Thyroid gland (tissue), 4 donors: ENCODE measurements at regions of chr12 and their contacts with region 1.

Region 1: DNA sequence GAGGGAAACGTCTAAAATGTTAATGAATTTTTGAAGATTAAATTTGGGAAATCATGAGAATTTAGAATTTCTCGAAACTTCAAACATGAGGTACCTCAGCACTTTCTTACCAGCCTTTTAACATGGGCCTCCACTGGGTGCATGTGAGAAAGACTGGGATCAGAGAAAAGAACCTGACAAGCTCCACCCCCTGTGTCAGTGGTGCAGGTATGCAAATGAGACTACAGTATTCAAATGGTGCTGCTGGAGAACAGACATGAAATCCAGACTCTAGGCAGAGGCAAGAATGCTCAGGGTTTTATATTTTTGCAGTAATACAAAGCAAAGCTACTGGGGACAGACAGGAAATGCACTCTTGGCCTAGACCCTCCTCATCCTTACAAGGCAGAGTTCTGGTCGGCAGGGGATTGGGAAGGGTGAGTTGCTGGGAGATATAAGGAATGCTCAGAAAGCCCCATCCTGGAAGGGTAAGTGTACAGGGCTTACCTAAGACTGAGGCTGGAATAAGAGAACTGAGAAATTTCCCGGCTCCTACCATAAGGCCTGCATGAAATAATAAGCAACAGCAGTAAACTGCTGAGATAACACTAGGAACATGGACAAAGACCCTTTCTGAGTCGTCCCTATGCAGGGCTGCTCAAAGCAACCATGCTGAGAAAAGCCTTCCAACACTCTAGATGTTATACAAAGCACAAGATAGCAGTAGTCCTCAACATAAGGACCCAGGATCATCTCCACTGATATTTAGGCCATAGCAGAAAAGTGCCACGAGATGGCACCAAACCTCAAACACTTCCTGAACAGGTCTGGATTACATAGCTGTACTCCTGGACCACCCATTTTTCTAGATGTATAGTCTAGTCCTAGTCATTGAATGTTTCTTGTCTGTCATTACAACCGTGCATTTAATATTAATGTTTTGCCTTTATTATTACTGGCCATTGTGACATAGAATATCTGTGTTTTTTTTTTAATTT is 260.8 kb downstream of the RASSF9 start:
- DNase-seq: peak; percentile 53 to 58
- H3K4me3 ChIP-seq: no peak overlapping the region
- H3K27ac ChIP-seq: no peak overlapping the region
- H3K4me1 ChIP-seq: no peaks in the 10 kb centered on the region
- H3K27me3 ChIP-seq: no peaks in the 10 kb centered on the region
- CTCF ChIP-seq: peak in 5 of 6 experiments; percentile 34 to 64 (median 56)
- POLR2A ChIP-seq: no peak

Region 2: DNA sequence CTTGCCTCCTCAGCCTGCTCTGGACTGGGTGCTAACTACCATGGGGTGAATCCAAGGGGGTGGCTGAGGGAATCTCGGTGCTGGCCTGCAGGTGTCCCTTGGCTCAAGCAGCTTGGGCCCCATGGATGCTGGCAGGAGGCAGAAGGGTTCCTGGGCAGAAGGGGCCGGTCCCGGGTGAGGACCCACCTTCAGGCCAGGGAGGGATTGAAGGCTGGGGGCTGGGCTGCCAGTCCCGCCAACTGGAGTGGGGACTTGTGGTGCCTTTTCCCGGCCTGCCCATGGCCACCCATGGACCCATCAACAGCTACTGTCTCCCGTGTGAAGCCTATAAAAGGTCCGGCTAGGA is 1212.9 kb before region 1 on chr12:
- intact Hi-C with region 1: no loop called
- DNase-seq: no peak
- H3K4me3 ChIP-seq: no peak overlapping the region
- H3K27ac ChIP-seq: no peak overlapping the region
- H3K4me1 ChIP-seq: no peaks in the 10 kb centered on the region
- H3K27me3 ChIP-seq: no peaks in the 10 kb centered on the region
- CTCF ChIP-seq: no peak
- POLR2A ChIP-seq: no peak

Region 3: DNA sequence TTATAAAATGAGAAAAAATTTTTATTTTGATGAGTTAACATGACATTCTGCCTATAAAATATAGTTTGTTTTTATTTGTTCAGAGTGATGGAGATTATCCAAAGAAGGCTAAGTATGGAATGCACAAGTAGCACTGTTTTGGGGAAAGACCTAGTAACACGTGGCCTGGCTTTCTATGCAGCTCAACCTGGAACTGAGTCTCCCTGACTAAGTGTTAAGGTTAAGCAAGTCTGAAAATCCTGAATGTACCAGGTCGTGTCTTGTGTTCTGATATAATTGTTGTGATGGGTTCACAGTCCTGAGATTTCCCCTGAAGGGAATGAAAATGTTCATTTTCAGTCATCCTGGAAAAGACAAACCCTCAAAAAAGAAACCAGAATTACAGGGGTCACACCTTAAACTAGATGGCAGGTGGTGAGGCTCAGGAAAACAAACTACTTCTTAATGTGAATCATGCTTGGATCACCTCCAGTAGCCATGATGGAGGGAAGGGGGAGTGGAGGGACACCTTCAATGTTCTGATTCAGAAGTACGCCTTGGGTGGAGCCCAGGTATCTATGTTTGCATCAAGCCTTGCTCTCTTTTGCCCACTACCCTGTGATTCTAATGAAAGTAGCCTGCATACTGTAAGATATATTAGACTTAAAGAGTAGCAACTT is 58.6 kb before region 1 on chr12:
- intact Hi-C with region 1: no loop called
- DNase-seq: no peak
- H3K4me3 ChIP-seq: no peak overlapping the region
- H3K27ac ChIP-seq: no peak overlapping the region
- H3K4me1 ChIP-seq: no peaks in the 10 kb centered on the region
- H3K27me3 ChIP-seq: no peaks in the 10 kb centered on the region
- CTCF ChIP-seq: no peak
- POLR2A ChIP-seq: no peak

Region 4: GRCh38 chr12:85866986-85867776 is 291.8 kb after region 1 on chr12:
- intact Hi-C with region 1: loop called (anchors 5 kb)
- DNase-seq: peak; percentile 30 to 32
- H3K4me3 ChIP-seq: no peak overlapping the region
- H3K27ac ChIP-seq: no peak overlapping the region
- H3K4me1 ChIP-seq: no peaks in the 10 kb centered on the region
- H3K27me3 ChIP-seq: no peaks in the 10 kb centered on the region
- CTCF ChIP-seq: peak; percentile 63 to 88 (median 72)
- POLR2A ChIP-seq: no peak